ENCODE measurements at regions of chr1 and their contacts with region 1.

Region 1: DNA sequence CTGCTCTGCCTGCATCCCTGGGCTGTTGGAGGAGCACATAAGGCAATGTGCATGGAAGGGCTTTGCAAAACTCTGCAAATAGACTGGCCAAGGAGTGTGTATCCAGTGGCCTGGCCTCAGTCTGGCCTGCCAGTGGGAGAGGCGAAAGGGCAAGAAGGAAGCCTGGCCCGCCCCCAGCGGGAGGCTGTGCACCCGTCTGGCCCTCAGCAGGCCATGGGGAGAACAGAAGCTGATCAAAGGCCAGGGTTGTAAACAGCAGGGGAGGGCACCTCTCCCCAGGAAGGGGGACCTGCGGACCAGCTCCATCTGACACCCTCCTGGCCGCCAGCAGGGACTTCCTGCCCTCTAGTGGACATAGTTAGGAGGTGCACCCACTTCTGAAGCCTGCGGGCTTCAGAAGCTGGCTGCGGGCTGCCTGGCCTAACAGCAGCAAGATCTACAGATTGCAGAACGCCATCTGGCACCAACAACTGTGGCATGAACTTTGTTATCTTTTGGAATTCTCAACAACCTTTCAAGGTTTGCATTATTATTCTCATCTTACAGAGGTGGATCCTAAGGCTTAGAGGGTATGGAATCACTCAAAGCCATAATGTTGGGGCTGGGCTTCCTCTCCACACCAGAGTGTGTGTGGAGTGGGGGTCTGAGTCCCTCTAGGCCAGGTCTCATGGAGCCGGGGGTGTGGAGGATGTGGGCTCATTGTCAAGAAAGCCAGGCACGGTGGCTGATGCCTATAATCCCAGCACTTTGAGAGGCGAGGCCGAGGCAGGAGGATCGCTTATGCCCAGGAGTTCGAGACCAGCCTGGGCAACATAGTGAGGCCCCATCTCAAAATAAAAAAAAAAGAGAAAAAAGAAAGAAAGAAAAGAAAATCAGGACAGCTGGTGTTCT is 18.9 kb upstream of the CDK18 start:
- DNase-seq: peak; percentile 79
- H3K4me3 ChIP-seq: no peak overlapping the region
- H3K27ac ChIP-seq: no peak overlapping the region
- H3K4me1 ChIP-seq: peaks cover 3% of the 10 kb centered on the region
- H3K27me3 ChIP-seq: no peaks in the 10 kb centered on the region
- CTCF ChIP-seq: peak; percentile 89 to 95 (median 91)
- POLR2A ChIP-seq: no peak

Region 2: DNA sequence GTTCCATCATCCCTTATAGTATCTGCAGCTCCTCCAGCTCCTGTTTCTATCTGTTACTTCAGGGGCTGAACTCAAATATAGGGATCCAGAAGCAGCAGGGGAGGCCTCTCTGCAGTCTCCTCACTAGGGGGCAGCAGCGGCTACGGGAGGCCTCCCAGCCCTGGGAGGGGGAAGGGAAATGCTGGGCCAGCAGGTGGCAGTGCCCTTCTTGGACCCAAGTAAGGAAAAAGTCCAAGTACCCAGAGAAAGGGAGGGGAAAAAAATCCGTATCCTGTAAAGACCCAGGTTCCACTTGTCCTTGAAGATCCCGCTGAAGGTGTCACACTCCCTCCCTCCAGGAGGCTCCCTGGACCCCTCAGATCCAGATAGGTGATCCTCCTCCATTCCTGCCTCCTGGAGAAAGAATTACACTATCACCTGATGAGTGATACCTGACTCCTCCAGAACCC is 149.9 kb before region 1 on chr1:
- intact Hi-C with region 1: loop called (anchors 10 kb)
- DNase-seq: peak; percentile 87
- H3K4me3 ChIP-seq: no peak overlapping the region
- H3K27ac ChIP-seq: no peak overlapping the region
- H3K4me1 ChIP-seq: no peaks in the 10 kb centered on the region
- H3K27me3 ChIP-seq: no peaks in the 10 kb centered on the region
- CTCF ChIP-seq: peak; percentile 76 to 87 (median 82)
- POLR2A ChIP-seq: no peak

Region 3: GRCh38 chr1:205396967-205397616 is 88.5 kb before region 1 on chr1:
- intact Hi-C with region 1: no loop called
- DNase-seq: peak; percentile 60
- H3K4me3 ChIP-seq: no peak overlapping the region
- H3K27ac ChIP-seq: no peak overlapping the region
- H3K4me1 ChIP-seq: no peaks in the 10 kb centered on the region
- H3K27me3 ChIP-seq: no peaks in the 10 kb centered on the region
- CTCF ChIP-seq: peak; percentile 66 to 82 (median 72)
- POLR2A ChIP-seq: no peak

Region 4: DNA sequence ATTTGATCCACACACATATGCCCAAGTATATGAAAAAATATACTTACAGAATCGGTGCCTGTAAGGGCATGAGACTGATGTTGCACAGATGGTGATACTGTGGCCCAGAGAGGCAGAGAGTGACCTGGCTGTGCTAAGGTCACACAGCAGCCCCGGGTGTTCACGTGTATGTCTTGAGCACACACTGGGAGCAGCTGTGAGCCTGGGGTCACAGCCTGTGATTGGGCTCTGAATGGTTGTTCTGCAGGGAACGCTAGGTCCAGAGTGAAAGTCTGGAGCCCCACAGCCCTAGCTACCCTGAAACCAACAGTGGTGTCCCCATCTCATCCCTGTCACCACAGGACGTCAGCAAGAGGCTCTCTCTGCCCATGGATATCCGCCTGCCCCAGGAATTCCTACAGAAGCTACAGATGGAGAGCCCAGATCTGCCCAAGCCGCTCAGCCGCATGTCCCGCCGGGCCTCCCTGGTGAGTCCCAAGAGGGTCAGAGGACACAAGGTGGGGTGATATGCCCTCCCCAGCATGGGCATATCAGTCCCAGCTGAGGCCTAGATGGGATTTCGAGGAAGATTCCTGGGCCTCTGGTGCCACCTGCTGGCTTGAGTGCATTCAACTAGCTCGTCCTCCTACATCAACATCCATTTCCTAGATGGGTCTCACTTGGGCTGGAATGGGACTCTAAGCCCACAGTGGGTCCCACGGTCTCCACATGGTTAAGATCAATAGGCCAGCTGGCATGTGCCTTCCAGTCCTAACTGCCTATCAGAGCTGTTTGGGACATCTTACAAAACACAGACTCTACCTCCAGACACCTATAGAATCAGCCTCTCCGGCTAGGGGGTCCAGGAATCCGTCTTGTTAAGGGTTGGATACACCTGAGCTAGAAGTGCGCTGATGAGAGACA is 38.6 kb after region 1 on chr1:
- intact Hi-C with region 1: loop called (anchors 5 kb)
- DNase-seq: peak; percentile 86
- H3K4me3 ChIP-seq: no peak overlapping the region
- H3K27ac ChIP-seq: no peak overlapping the region
- H3K4me1 ChIP-seq: no peaks in the 10 kb centered on the region
- H3K27me3 ChIP-seq: no peaks in the 10 kb centered on the region
- CTCF ChIP-seq: peak; percentile 65 to 75 (median 73)
- POLR2A ChIP-seq: no peak

Measured in testis (tissue), 5 donors.